GM13977 (cell line): ENCODE measurements at regions of chr16 and their contacts with region 1.

Region 1: DNA sequence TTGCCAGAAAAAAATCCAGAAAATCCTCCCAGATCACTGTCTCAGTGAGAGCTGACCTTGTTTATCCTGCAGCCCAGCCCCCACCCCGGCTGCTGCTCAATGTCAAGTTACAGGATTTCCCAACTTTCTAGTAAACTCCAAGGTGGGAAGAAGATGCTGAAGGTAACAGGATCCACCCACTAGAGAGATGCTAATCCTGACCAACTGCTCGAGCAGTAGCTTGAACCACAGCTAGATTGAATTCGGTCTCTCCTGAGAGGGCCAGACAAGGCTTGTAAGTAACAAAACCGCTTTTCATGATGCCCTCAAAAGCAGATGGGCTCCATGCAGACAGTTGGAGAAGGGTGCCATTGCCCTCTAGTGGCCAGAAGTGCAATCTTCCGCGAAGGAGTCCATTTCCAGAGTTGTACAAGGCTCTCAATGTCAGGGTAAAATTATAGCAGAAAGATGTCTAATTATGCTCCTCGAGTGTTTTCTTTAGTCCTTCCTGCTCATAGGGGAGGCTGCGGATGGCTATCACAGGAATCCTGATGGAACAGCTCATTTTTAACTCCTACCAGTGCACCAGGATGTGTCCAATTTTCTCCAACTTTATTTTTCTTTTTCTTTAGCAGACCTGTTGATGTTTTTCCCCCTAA is 3.9 kb downstream of the CDH11 start:
- DNase-seq: peak; percentile 62
- CTCF ChIP-seq: peak; percentile 90

Region 2: DNA sequence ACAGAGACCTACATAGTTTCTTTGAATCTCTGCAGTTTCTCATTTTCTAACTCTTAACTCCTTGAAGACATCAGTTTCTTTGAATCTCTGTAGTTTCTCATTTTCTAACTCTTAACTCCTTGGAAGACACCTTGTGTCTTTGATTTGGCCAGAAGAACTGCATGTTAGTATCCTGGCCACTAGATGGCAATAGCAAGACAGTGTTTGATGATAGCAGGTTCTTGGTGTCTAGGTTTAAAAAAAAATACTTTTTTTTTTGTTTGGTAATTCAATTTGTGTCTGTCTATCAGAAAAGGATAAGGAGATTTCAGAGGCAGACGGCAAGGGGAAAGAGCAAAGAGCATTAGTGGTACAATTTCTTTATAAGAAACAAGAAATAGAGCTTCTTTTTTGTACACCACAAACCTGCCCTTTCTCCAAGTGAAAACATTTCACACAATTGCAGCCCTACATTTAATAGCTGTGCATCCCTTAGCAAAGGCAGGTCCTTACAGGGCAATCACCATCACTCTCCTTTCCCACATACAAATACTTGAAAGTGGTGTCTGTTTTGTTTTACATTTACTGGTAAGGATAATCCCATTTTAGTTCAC is 1756.8 kb before region 1 on chr16:
- in situ Hi-C with region 1: loop called (anchors 25 kb)
- DNase-seq: peak; percentile 23
- CTCF ChIP-seq: peak; percentile 86